ENCODE measurements at regions of chr10 and their contacts with region 1.

Region 1: DNA sequence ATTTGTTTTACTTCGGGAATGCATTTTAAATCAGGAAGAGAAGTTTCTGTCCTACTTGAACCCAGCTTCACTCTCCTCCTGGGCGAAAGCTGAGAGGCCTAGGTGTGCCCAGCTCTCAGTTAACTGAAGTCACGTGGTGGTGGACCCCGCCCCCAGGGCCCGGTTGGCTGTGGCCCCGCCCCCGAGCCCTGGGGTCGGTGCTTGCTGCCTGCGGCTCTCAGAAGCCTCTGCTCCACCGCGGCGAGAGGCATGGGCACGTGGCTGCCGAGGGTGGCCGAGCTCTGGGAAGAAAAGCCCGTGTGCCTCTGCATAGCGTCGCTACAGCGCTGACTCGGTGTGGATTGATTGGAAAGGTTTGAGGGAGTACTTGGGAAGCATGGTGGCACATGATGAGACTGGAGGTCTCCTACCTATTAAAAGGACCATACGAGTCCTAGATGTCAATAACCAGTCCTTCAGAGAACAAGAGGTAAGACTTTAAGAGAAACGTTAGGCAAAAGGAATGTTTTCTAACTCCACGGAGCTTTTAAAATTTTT is 34.1 kb downstream of the NET1 start:
- DNase-seq: peak; percentile 75
- H3K4me3 Mint-ChIP-seq: peak overlapping the region; percentile 89
- H3K27ac Mint-ChIP-seq: peak overlapping the region; percentile 79
- H3K4me1 Mint-ChIP-seq: peaks cover 62% of the 10 kb centered on the region
- H3K27me3 Mint-ChIP-seq: no peaks in the 10 kb centered on the region

Region 2: GRCh38 chr10:5412277-5412941 is 34.0 kb before region 1 on chr10 and contains the start of gene NET1:
- intact Hi-C with region 1: loop called (anchors 5 kb)
- DNase-seq: peak; percentile 70
- H3K4me3 Mint-ChIP-seq: peak within 1 kb of the TSS; percentile 86
- H3K27ac Mint-ChIP-seq: peak within 1 kb of the TSS; percentile 59
- H3K4me1 Mint-ChIP-seq: peaks cover 5% of the 10 kb centered on the region
- H3K27me3 Mint-ChIP-seq: peaks cover 18% of the 10 kb centered on the region
- total RNA-seq, gene NET1: 37.2 and 40.3 TPM in 2 replicates

Region 3: DNA sequence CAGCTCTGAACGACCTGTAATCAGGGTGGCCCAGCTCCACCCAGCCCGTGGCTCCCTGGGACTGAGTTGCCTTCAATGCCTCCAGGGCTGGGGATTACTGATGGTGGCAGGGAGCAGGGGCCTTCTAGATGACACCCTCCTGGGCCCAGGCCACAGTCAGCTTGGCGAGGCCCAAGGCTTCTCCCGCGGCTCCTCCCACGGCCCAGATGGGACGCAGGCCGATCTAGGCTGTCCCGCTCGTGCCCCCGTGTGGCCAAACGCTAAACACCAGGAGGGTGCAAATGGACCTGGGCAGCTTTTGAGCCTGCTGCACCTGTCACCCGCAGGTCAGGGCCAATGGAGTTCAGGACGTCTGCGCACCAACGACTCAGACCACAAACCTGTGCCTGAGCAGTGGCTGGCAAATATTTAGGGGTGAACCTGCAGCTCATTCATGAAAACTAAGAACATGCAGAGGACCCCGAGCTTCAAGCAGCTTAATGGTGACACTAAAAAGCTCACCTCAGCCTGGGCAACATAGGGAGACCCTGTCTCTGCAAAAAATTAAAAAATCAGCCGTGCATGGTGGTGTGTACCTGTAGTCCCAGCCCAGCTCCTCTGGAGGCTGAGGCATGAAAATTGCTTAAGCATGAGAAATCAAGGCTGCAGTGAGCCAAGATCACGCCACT is 176.8 kb after region 1 on chr10:
- intact Hi-C with region 1: loop called (anchors 1 kb)
- DNase-seq: peak; percentile 72
- H3K4me3 Mint-ChIP-seq: no peak overlapping the region
- H3K27ac Mint-ChIP-seq: no peak overlapping the region
- H3K4me1 Mint-ChIP-seq: no peaks in the 10 kb centered on the region
- H3K27me3 Mint-ChIP-seq: peaks cover 6% of the 10 kb centered on the region

Region 4: GRCh38 chr10:5889624-5890451 is 443.4 kb after region 1 on chr10 and contains the starts of genes ANKRD16 and FBH1:
- intact Hi-C with region 1: loop called (anchors 5 kb)
- DNase-seq: peak; percentile 99
- H3K4me3 Mint-ChIP-seq: peak within 1 kb of the TSS; percentile 91
- H3K27ac Mint-ChIP-seq: peak within 1 kb of the TSS; percentile 76
- H3K4me1 Mint-ChIP-seq: peaks cover 52% of the 10 kb centered on the region
- H3K27me3 Mint-ChIP-seq: no peaks in the 10 kb centered on the region
- total RNA-seq, gene ANKRD16: 11.3 and 12.4 TPM in 2 replicates
- total RNA-seq, gene FBH1: 66.9 and 70.6 TPM in 2 replicates